IMR-90 (cell line): ENCODE measurements at regions of chr19 and their contacts with region 1.

Region 1: DNA sequence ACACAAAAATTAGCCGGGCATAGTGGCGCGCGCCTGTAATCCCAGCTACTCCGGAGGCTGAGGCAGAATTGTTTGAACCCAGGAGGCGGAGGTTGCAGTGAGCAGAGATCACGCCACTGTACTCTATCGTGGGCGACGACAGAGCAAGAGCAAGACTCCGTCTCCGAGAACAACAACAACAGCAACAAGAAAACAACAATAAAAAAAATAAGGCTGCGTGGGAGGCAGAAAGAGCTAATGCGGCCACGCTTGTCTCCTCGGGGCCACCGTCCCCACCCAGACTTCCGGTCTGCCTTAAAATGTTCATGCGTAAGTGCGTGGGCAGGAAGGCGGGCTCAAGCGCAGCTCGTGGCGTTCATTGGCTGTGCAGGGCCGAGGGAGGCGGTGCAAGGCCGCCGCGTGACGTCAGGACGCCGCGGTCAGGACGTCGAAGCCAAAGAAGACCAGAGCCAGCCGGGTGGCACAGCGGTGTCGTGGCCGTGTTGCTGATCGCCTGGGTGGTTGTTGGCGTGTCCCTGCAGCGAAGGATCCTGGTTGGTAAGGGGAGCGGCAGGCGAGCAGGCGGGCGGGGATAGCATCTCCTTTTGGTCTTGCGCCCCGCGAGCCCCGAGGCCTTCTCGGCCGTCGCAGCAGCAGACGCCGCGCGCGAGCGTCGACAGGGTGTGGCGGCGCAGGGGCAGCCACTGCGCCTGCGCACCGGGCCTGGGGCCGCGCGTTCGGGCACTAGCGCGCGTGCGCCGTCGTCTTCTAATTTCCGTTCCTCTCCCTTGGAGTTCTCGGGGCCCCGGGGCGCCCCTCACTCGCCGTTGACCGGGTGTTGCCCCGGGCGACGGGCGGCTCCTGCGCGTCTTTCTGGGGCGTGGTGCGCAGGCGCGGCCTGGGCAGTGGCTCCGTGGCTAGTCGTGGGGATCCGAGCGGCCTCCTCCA is at the start of gene LENG8:
- DNase-seq: peak; percentile 99
- ATAC-seq: peak; percentile 91
- H3K4me3 ChIP-seq: peak within 1 kb of the TSS; percentile 69
- H3K27ac ChIP-seq: peak within 1 kb of the TSS; percentile 97
- H3K4me1 ChIP-seq: peaks cover 6% of the 10 kb centered on the region
- H3K27me3 ChIP-seq: no peaks in the 10 kb centered on the region
- CTCF ChIP-seq: no peak
- POLR2A ChIP-seq: peak; percentile 96
- RAD21 ChIP-seq: no peak
- total RNA-seq, gene LENG8: 17.5 and 21.1 TPM in 2 replicates

Region 2: DNA sequence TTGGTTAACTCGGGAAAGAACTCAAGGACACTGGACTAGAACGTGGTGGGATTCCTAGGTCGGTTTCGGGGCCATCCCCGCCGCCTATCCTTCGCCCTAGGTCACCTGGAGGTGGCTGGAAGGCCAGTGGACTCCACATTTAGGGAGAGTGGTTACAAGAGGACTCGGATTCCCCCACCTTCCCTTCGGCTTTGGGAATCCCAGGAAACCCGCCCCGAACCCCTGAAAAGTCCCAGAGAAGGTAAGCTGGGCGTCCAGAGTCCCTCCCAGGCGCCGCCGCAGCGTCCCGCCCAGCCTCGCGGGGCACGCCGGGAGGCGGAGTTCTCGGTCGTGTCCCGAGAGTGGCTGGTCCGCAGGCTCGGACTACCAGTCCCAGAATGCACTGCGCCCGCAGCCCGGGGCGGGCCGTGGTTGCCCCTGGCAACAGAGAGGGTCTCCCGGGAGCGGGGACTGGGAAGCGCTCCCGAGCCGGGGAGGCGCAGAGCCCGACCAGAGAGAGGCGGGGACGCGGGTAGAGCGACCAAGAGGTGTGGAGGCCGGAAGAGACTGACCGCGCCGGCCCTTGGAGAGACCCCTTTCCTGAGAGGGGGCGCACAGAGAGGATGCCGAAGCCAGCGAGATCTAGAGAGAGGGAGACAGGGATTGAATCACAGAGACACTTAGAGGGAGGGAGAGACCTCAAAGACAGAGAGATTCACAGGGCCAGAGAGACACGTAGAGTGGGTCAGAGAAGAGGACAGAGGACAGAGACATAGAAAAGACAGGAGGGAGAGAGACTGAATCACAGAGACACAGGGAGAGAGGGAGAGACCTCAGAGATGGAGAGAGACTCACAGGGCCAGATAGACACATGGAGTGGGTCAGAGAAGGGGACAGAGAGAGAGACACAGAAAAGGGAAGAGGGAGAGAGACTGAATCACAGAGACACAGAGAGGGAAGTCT is 569.6 kb before region 1 on chr19:
- CTCF ChIA-PET with region 1: no interaction called
- POLR2A ChIA-PET with region 1: no interaction called
- dilution Hi-C with region 1: no loop called
- in situ Hi-C with region 1: loop called (anchors 10 kb)
- intact Hi-C with region 1: no loop called
- DNase-seq: peak; percentile 83
- ATAC-seq: peak; percentile 98
- H3K4me3 ChIP-seq: peak overlapping the region; percentile 80
- H3K27ac ChIP-seq: peak overlapping the region; percentile 68
- H3K4me1 ChIP-seq: peaks cover 5% of the 10 kb centered on the region
- H3K27me3 ChIP-seq: peaks cover 34% of the 10 kb centered on the region
- CTCF ChIP-seq: no peak
- POLR2A ChIP-seq: peak; percentile 76
- RAD21 ChIP-seq: no peak

Region 3: GRCh38 chr19:54209811-54210494 is 239.1 kb before region 1 on chr19:
- CTCF ChIA-PET with region 1: no interaction called
- POLR2A ChIA-PET with region 1: no interaction called
- dilution Hi-C with region 1: no loop called
- in situ Hi-C with region 1: loop called (anchors 10 kb)
- intact Hi-C with region 1: no loop called
- DNase-seq: peak; percentile 98
- ATAC-seq: peak; percentile 88
- H3K4me3 ChIP-seq: no peak overlapping the region
- H3K27ac ChIP-seq: peak overlapping the region; percentile 48; the same call in 1 of the 2 replicates
- H3K4me1 ChIP-seq: peaks cover 30% of the 10 kb centered on the region
- H3K27me3 ChIP-seq: no peaks in the 10 kb centered on the region
- CTCF ChIP-seq: no peak
- POLR2A ChIP-seq: peak; percentile 37; the same call in 1 of the 2 replicates
- RAD21 ChIP-seq: no peak